Activated naive CD4-positive, alpha-beta T cell treated with anti-CD3 and anti-CD28 coated beads for 36 hours (primary cell): ENCODE measurements at regions of chr5 and their contacts with region 1.

Region 1: GRCh38 chr5:135488727-135489465 is 36.7 kb upstream of the TIFAB start:
- DNase-seq: no peak
- H3K4me3 Mint-ChIP-seq: no peak overlapping the region
- H3K27ac Mint-ChIP-seq: no peak overlapping the region
- H3K4me1 Mint-ChIP-seq: peaks cover 14% of the 10 kb centered on the region
- H3K27me3 Mint-ChIP-seq: peaks cover 64% of the 10 kb centered on the region

Region 2: GRCh38 chr5:135039271-135040045 is 449.4 kb before region 1 on chr5:
- CTCF ChIA-PET with region 1: no interaction called
- intact Hi-C with region 1: loop called (anchors 5 kb)
- DNase-seq: peak; percentile 22
- H3K4me3 Mint-ChIP-seq: no peak overlapping the region
- H3K27ac Mint-ChIP-seq: no peak overlapping the region
- H3K4me1 Mint-ChIP-seq: peaks cover 14% of the 10 kb centered on the region
- H3K27me3 Mint-ChIP-seq: peaks cover 66% of the 10 kb centered on the region

Region 3: DNA sequence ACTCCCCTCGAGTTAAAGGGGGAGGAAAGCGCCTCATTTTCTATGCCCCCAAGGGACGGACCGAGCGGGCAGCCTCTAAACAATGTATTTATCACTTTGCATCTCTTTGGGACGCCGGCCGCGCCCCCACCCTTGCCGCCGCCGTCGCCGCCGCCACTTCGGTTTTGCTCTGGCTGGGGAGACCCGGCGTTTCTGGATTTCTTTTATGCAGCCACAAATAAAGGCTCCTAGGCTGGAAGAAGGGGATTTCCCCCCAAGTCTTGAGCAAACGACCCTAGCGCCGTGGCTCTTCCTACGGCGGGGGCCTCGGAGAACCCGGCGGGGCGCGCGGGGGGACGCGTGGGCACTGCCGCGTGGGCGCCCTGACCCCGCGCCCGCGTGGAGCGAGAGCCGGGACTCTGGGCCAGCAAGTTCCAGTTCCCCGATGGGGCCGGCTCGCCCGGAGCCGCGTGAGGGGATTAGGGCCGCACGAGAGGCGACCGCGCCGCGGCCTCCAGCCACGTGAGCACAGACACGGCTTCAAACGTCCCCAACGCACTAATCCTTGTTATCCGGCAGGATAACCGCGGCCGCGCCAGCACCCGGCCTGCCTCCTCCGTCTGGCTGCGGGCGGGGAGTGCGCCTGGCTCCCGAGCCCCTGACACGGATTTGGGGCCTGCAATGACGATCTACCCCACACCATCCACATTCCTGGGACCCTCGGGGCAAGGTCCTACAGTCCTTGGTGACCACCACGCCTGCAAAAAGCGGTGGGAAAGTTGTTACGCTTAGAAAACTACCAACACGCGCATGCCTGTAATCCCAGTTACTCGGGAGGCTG is 54.8 kb after region 1 on chr5:
- CTCF ChIA-PET with region 1: no interaction called
- intact Hi-C with region 1: loop called (anchors 2 kb)
- DNase-seq: peak; percentile 8
- H3K4me3 Mint-ChIP-seq: peak overlapping the region; percentile 76
- H3K27ac Mint-ChIP-seq: no peak overlapping the region
- H3K4me1 Mint-ChIP-seq: peaks cover 10% of the 10 kb centered on the region
- H3K27me3 Mint-ChIP-seq: peaks cover 68% of the 10 kb centered on the region

Region 4: DNA sequence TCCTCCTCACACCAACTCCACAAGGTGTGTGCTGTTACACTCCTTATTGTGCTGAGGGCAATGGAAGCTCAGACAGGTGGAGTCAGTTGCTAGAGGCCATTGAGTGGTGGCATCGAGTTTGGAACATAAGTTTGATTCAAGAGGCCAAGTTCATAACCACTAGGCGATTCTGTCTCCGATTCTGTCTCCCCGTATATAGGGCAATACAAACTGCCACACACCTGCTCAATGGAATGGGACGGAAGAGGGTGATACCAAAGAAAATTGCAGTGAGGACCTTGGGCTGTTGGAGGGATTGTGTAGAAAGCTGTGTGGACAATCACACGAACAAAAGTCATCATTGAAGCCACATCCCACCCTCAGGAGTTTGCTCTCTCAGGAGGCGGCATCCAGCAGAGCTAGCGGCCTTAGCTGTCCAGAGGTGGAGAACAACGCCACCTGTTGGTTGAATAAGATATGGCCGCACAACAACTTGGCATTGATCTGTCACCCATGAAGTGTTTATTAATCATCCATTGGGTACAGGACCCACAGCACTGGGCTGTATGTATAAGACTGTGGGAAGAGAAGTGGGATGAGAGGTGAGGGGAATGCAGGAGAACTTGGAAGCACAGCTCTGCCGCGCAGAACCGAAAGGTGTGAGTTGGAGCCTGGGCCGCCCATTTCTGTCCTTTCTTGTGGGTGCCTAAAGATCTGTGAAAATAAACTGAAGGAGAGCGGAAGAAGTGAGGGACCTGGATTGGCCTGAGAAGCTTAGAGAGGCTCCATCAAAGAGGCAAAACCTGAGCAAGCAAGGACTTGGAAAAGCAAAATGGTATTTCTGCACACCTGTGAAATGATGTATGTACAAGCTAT is 62.9 kb after region 1 on chr5:
- CTCF ChIA-PET with region 1: interaction called, 11 read pairs
- intact Hi-C with region 1: no loop called
- DNase-seq: peak; percentile 82
- H3K4me3 Mint-ChIP-seq: no peak overlapping the region
- H3K27ac Mint-ChIP-seq: no peak overlapping the region
- H3K4me1 Mint-ChIP-seq: no peaks in the 10 kb centered on the region
- H3K27me3 Mint-ChIP-seq: peaks cover 45% of the 10 kb centered on the region